Caco-2 (cell line): ENCODE measurements at regions of chr15 and their contacts with region 1.

Region 1: GRCh38 chr15:88454867-88455810 is 12.0 kb downstream of the MRPL46 start:
- DNase-seq: peak; percentile 57 to 59
- H3K4me3 ChIP-seq: no peak overlapping the region
- H3K4me3 Mint-ChIP-seq: no peak overlapping the region
- H3K27ac Mint-ChIP-seq: no peak overlapping the region
- H3K4me1 ChIP-seq: no peaks in the 10 kb centered on the region
- H3K4me1 Mint-ChIP-seq: peaks cover 7% of the 10 kb centered on the region
- H3K27me3 ChIP-seq: no peaks in the 10 kb centered on the region
- H3K27me3 Mint-ChIP-seq: no peaks in the 10 kb centered on the region
- CTCF ChIP-seq: peak; percentile 46 to 69

Region 2: DNA sequence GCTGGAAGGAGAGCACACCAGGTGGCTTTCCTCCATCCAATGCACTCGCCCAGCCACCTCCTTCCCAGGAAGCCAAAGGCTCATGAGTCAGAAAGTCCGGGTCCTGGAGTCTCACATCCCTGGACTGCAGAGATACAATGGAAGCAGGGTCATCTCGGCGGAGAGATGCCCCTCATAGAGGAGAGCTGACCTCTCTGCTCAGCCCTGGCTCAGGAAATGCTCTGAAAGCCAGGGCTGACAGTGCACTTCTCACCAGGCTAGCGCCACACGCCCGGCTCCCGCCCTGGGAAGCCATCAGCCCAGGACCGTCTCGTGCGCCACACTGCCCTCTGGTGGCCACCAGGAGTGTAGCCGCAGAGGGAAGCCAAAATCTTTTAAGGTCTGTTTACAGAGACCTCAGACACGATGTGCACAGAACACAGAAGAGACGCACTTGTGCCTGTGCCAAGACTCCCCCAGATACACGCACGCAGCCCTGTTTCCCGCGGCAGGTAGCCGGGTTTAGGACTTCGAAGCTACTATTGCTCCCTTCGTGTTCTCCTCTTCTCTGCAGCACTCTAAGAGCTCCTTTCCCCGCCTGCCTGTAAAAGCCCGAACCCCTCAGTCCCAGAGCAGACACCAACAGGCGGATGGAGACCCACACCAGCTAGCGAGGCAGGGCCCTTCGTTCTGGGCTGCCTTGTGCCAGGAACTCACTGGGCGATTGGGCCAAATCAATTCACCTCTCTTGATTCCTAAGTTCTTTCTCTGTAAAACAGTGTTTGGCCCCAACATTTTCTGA is 208.3 kb before region 1 on chr15:
- CTCF ChIA-PET with region 1: no interaction called
- POLR2A ChIA-PET with region 1: no interaction called
- intact Hi-C with region 1: loop called (anchors 1 kb)
- DNase-seq: peak; percentile 66 to 79
- H3K4me3 ChIP-seq: no peak overlapping the region
- H3K4me3 Mint-ChIP-seq: no peak overlapping the region
- H3K27ac Mint-ChIP-seq: no peak overlapping the region
- H3K4me1 ChIP-seq: no peaks in the 10 kb centered on the region
- H3K4me1 Mint-ChIP-seq: no peaks in the 10 kb centered on the region
- H3K27me3 ChIP-seq: no peaks in the 10 kb centered on the region
- H3K27me3 Mint-ChIP-seq: peaks cover 10% of the 10 kb centered on the region
- CTCF ChIP-seq: peak; percentile 86 to 87

Region 3: DNA sequence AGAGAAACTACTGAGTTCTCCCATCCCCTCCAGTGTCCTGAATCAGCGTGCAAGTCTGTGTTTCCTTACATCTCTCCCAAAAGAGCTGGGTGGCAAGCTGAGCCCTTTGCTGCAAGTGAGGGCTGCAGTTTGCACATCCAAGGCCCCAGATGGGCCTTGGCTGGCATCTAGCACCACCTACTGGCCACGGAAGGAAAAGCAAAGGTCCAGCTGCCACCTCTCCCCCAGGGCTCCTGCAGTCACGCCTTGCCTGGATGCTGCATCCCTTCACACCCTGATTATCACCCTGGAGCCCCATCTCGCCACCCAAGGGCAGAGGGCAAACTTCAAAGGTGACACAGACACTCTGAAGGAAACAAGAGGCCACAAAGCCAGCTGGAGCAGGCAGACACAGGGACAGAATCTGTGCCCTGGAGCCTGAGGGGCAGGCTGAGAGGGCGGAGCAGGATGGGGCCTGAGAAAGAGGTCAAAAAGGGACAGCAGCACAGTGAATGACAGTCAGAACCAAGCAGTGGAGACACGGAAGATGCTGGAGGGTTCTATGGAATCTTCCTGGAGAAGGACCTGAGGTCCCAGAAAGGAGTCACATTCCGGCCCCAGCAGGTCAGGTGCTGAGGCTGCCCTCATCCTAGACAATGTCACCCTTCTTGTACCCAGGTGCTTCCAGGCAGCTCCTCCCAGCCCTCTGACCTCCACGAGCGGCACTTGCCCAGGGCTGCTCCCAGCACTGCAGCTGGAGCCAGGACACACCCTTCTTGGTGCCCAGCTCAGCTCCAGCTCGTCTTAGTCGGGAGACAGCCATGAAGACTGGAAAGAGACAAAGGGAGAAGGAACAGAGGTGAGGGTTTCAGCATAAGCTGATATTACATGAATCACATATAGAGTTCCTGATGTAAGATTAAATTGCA is 180.3 kb before region 1 on chr15:
- CTCF ChIA-PET with region 1: no interaction called
- POLR2A ChIA-PET with region 1: no interaction called
- intact Hi-C with region 1: loop called (anchors 10 kb)
- DNase-seq: peak; percentile 60 to 67
- H3K4me3 ChIP-seq: no peak overlapping the region
- H3K4me3 Mint-ChIP-seq: no peak overlapping the region
- H3K27ac Mint-ChIP-seq: no peak overlapping the region
- H3K4me1 ChIP-seq: peaks cover 5% of the 10 kb centered on the region; the same call in 1 of the 2 replicates
- H3K4me1 Mint-ChIP-seq: no peaks in the 10 kb centered on the region
- H3K27me3 ChIP-seq: no peaks in the 10 kb centered on the region
- H3K27me3 Mint-ChIP-seq: peaks cover 15% of the 10 kb centered on the region
- CTCF ChIP-seq: peak; percentile 72 to 79

Region 4: GRCh38 chr15:88331280-88331679 is 123.9 kb before region 1 on chr15:
- CTCF ChIA-PET with region 1: interaction called, 3 read pairs
- POLR2A ChIA-PET with region 1: no interaction called
- intact Hi-C with region 1: loop called (anchors 5 kb)
- DNase-seq: peak; percentile 58 to 72
- H3K4me3 ChIP-seq: no peak overlapping the region
- H3K4me3 Mint-ChIP-seq: no peak overlapping the region
- H3K27ac Mint-ChIP-seq: no peak overlapping the region
- H3K4me1 ChIP-seq: no peaks in the 10 kb centered on the region
- H3K4me1 Mint-ChIP-seq: no peaks in the 10 kb centered on the region
- H3K27me3 ChIP-seq: peaks cover 1% of the 10 kb centered on the region; the same call in 1 of the 2 replicates
- H3K27me3 Mint-ChIP-seq: peaks cover 17% of the 10 kb centered on the region
- CTCF ChIP-seq: peak; percentile 66 to 68

Region 5: DNA sequence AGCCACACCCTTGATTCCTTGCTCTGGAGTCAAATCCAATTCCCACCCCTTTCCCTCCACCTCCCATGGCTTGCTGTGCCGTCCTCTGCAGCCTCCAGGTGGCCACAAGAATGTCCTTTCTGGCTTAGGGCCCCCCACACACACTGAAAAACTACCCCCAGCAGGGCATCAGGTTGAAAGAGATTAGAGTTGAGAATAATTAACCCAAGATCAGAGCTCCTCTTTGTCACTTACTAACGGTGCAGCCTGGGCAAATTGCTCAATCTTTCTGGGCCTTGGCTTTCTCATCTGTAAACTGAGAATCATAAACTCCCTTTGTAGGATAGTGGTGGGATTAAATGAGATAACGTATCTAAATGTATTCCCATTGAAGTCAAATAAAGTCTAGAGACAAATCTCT is 66.4 kb before region 1 on chr15:
- CTCF ChIA-PET with region 1: interaction called, 3 read pairs
- POLR2A ChIA-PET with region 1: no interaction called
- intact Hi-C with region 1: loop called (anchors 1 kb)
- DNase-seq: peak; percentile 63 to 79
- H3K4me3 ChIP-seq: no peak overlapping the region
- H3K4me3 Mint-ChIP-seq: no peak overlapping the region
- H3K27ac Mint-ChIP-seq: no peak overlapping the region
- H3K4me1 ChIP-seq: peaks cover 15% of the 10 kb centered on the region
- H3K4me1 Mint-ChIP-seq: peaks cover 12% of the 10 kb centered on the region
- H3K27me3 ChIP-seq: no peaks in the 10 kb centered on the region
- H3K27me3 Mint-ChIP-seq: peaks cover 3% of the 10 kb centered on the region
- CTCF ChIP-seq: no peak

Region 6: GRCh38 chr15:88440021-88440420 is 15.1 kb before region 1 on chr15:
- CTCF ChIA-PET with region 1: no interaction called
- POLR2A ChIA-PET with region 1: no interaction called
- intact Hi-C with region 1: loop called (anchors 2 kb)
- DNase-seq: no peak
- H3K4me3 ChIP-seq: no peak overlapping the region
- H3K4me3 Mint-ChIP-seq: no peak overlapping the region
- H3K27ac Mint-ChIP-seq: no peak overlapping the region
- H3K4me1 ChIP-seq: no peaks in the 10 kb centered on the region
- H3K4me1 Mint-ChIP-seq: no peaks in the 10 kb centered on the region
- H3K27me3 ChIP-seq: no peaks in the 10 kb centered on the region
- H3K27me3 Mint-ChIP-seq: peaks cover 7% of the 10 kb centered on the region
- CTCF ChIP-seq: no peak